PC-9 (cell line): ENCODE measurements at regions of chr6 and their contacts with region 1.

Region 1: DNA sequence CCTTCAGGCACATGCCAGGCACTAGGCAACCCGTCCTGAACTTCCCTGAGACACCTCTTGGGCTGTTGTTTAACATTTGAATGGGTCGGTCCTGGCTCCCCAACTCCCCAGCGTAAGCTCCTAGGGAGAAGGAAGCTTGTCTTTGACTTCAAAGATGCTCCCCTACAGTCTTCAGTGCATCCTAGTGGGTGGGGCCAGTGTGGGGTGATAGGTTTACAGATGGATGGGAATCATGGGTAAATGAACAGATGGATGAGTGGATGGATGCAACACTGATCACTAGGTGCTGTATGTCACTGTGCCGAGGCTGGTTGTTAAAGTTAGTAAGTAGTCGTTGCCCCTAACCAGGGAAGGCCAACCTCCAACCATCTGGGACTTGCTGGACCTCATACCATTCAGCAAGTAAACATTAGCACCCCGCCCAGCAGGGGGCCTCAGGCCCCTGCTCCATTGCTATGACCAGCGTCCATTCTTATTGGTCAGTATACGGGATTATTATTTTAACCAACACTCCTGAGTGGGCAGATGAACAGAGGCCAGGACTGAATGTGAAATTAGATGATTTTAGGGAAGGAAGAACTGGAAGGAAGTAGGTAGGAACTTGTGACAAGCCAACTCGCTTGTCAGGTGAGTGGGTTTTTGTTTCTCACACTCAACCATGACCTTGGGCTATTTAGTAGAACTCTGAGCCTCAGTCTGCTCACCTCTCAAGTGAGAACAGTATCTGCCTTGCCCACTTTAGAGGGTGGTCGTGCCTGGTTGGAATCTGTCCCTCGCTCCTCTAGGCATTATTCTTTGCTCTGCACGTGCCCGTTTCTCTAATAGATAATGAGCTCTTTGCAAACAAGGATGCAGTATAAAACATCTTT is 82.9 kb upstream of the FOXP4 start:
- DNase-seq: peak; percentile 37 to 60
- H3K4me3 ChIP-seq: no peak overlapping the region
- H3K27ac ChIP-seq: no peak overlapping the region
- H3K4me1 ChIP-seq: peaks cover 11% of the 10 kb centered on the region
- H3K27me3 ChIP-seq: peaks cover 23% of the 10 kb centered on the region; the same call in 1 of the 2 replicates
- CTCF ChIP-seq: peak; percentile 53

Region 2: DNA sequence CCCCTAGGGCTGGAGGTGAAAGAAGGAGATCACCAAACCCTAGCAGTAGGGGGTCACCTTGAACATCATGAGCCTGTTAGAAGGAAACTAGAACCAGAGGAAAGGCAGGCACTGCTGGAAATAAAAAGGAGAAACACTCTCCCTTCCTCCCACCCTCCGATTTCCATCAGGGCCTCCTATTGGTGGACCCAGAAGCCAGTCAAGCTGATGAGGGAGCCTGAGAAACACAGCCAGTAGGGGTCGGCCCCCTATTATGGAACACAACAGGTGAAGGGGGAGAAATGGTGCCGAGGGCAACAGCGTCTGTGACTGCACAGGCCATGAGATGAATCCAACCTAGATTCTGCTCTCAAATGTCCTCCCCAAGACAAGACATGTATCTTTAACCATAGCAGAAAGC is 720.1 kb before region 1 on chr6:
- CTCF ChIA-PET with region 1: no interaction called
- POLR2A ChIA-PET with region 1: no interaction called
- intact Hi-C with region 1: no loop called
- DNase-seq: no peak
- H3K4me3 ChIP-seq: no peak overlapping the region
- H3K27ac ChIP-seq: no peak overlapping the region
- H3K4me1 ChIP-seq: no peaks in the 10 kb centered on the region
- H3K27me3 ChIP-seq: peaks cover 62% of the 10 kb centered on the region
- CTCF ChIP-seq: no peak

Region 3: DNA sequence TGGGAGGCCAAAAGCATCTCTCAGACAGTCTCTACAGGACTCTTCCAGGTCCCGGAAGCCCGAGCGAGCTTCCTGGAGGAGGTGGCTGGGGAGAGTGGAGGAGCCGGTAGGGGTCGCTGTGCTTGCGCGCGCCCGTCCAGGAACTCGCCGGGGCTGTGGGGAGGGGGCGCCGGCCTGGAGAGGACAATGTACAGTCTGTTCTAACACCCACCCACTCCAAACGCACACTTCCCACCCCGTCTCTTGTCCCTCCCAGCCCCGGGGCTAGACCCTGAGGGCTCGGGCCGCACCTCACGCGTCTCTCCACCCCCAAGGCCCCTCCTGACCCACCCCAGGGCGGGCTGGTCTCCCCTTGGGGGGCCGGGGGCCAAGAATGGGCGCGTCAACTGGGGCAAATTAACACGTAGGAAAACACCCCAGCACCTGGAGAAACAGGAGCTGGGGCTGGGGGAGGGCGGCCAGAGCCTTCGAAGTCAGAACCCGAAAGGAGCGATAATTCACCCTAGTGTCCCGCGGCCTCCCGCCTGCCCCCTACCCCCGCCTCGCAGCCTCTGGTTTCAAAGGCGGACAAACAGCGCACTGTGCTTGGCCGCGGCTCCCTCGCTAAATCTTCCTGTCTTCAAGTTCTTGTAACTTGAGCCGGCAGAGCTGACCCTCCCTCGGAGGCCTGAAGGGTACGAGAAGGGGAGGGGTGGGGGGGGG is 20.3 kb before region 1 on chr6:
- CTCF ChIA-PET with region 1: interaction called, 11 read pairs
- POLR2A ChIA-PET with region 1: no interaction called
- intact Hi-C with region 1: no loop called
- DNase-seq: no peak
- H3K4me3 ChIP-seq: no peak overlapping the region
- H3K27ac ChIP-seq: no peak overlapping the region
- H3K4me1 ChIP-seq: no peaks in the 10 kb centered on the region
- H3K27me3 ChIP-seq: peaks cover 39% of the 10 kb centered on the region
- CTCF ChIP-seq: no peak; the same call in 1 of the 2 replicates

Region 4: GRCh38 chr6:41531016-41531415 is 67.7 kb after region 1 on chr6:
- CTCF ChIA-PET with region 1: interaction called, 13 read pairs
- POLR2A ChIA-PET with region 1: no interaction called
- intact Hi-C with region 1: no loop called
- DNase-seq: no peak
- H3K4me3 ChIP-seq: no peak overlapping the region
- H3K27ac ChIP-seq: no peak overlapping the region
- H3K4me1 ChIP-seq: peaks cover 14% of the 10 kb centered on the region; the same call in 1 of the 2 replicates
- H3K27me3 ChIP-seq: no peaks in the 10 kb centered on the region
- CTCF ChIP-seq: no peak

Region 5: GRCh38 chr6:41591859-41592502 is 128.7 kb after region 1 on chr6:
- CTCF ChIA-PET with region 1: no interaction called
- POLR2A ChIA-PET with region 1: no interaction called
- intact Hi-C with region 1: loop called (anchors 1 kb)
- DNase-seq: peak; percentile 53 to 71
- H3K4me3 ChIP-seq: no peak overlapping the region
- H3K27ac ChIP-seq: no peak overlapping the region
- H3K4me1 ChIP-seq: no peaks in the 10 kb centered on the region
- H3K27me3 ChIP-seq: no peaks in the 10 kb centered on the region
- CTCF ChIP-seq: peak; percentile 95

Region 6: DNA sequence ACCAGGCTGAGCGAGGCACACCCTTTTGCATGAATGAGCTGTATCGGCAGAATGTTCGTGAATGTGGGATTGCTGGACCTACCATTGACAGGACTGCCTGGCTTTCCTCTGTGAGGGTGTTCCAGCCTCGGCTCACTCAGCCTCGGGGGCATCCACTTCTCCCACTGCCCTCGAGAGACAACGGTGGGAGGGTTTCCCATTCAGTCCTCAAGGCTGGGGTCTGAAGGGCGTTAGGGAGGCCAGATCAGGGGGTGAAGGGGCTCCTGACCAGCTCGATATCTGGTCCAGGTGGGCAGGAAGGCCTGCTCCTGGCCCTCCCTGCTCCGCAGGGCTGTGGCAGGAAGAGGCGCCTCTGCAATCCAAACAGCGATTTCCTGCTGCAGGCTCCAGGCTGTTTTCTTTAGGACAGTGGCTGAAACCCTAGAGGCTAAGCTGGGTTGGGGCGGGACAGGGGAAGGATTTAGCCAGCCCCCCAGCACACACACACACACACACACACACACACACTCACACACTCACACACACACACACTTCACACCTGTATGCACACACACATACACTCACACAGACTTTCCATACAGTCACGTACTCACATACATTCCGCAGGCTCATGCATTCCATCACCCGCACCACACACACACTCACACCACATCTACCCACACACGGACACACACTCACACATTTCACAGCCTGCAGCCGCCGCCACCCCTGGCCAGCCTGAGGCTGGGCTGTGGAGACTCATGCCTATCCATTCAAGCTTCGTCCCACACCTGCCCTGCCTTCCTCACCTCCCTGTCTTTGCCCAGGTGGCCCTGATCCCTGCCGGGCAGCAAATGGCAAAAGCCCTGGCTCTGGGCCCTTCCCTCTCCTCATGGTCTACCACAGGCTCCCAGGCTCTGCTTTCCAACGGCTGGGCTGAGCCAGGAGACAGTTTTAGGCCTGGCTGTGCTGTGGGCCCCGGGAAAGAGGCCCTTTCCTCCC is 192.7 kb after region 1 on chr6:
- CTCF ChIA-PET with region 1: interaction called, 4 read pairs
- POLR2A ChIA-PET with region 1: interaction called, 50 read pairs
- intact Hi-C with region 1: no loop called
- DNase-seq: no peak
- H3K4me3 ChIP-seq: no peak overlapping the region
- H3K27ac ChIP-seq: no peak overlapping the region
- H3K4me1 ChIP-seq: 0 out of 2 replicates have a peak, but pooled peaks cover 8% of the 10 kb centered on the region
- H3K27me3 ChIP-seq: peaks cover 23% of the 10 kb centered on the region
- CTCF ChIP-seq: no peak

Region 7: GRCh38 chr6:41735427-41736356 is 272.4 kb after region 1 on chr6 and contains the start of gene TFEB:
- CTCF ChIA-PET with region 1: interaction called, 12 read pairs
- POLR2A ChIA-PET with region 1: no interaction called
- intact Hi-C with region 1: no loop called
- DNase-seq: peak; percentile 81 to 94
- H3K4me3 ChIP-seq: peak within 1 kb of the TSS; percentile 57
- H3K27ac ChIP-seq: no peak within 1 kb of the TSS
- H3K4me1 ChIP-seq: peaks cover 24% of the 10 kb centered on the region
- H3K27me3 ChIP-seq: no peaks in the 10 kb centered on the region
- CTCF ChIP-seq: peak; percentile 75
- total RNA-seq, gene TFEB: 7.3 and 8.6 TPM in 2 replicates